Activated T-helper 1 cell treated with anti-CD3 and anti-CD28 coated beads, Interleukin-12 subunit alpha, Interleukin-12 subunit beta, Interleukin-2, Interleukin-4 antibody, amounts not matched to agents 30 ng/mL and 10 ng/mL and 1 ng/mL, durations not matched to agents 14 hours and 24 hours and 36 hours (primary cell): ENCODE measurements at regions of chr19 and their contacts with region 1.

Region 1: DNA sequence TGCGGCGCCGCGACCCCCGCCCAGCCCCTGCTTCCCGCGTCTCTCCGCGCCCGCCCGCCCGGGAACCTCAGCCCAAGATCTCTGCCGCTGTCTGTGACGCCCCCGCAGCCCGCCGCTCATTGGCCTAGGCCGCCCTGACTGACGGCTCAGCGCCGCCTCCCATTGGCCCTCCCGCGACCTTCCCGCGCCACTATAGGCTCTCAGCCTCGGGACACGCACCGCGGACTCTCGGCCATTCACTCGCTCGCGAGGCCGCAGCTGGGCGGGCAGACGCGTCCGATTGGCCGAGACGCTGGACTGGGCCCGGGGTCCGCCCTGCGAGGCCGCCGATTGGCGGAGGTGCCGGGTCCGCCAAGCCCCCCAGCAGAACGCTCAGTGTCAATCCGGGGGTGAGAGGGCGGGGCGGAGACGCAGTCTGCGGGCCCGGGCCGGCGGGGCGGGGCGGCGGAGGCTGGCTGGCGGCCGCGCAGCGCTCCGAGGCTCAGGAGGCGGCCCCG is at the start of gene PRKACA:
- DNase-seq: peak; percentile 99
- H3K4me3 Mint-ChIP-seq: peak within 1 kb of the TSS; percentile 94
- H3K27ac Mint-ChIP-seq: peak within 1 kb of the TSS; percentile 97
- H3K4me1 Mint-ChIP-seq: peaks cover 39% of the 10 kb centered on the region
- H3K27me3 Mint-ChIP-seq: peaks cover 2% of the 10 kb centered on the region
- total RNA-seq, gene PRKACA: 58.6 and 63.7 TPM in 2 replicates

Region 2: GRCh38 chr19:13597640-13598039 is 520.1 kb before region 1 on chr19:
- intact Hi-C with region 1: loop called (anchors 5 kb)
- DNase-seq: peak; percentile 34
- H3K4me3 Mint-ChIP-seq: no peak overlapping the region
- H3K27ac Mint-ChIP-seq: no peak overlapping the region
- H3K4me1 Mint-ChIP-seq: peaks cover 4% of the 10 kb centered on the region
- H3K27me3 Mint-ChIP-seq: no peaks in the 10 kb centered on the region

Region 3: GRCh38 chr19:13774217-13775191 is 343.2 kb before region 1 on chr19 and contains the start of gene C19orf53:
- intact Hi-C with region 1: loop called (anchors 10 kb)
- DNase-seq: peak; percentile 87
- H3K4me3 Mint-ChIP-seq: peak within 1 kb of the TSS; percentile 100
- H3K27ac Mint-ChIP-seq: peak within 1 kb of the TSS; percentile 99
- H3K4me1 Mint-ChIP-seq: peaks cover 25% of the 10 kb centered on the region
- H3K27me3 Mint-ChIP-seq: no peaks in the 10 kb centered on the region
- total RNA-seq, gene C19orf53: 158 and 162 TPM in 2 replicates

Region 4: GRCh38 chr19:14081325-14082093 is 36.2 kb before region 1 on chr19:
- intact Hi-C with region 1: loop called (anchors 1 kb)
- DNase-seq: peak; percentile 99
- H3K4me3 Mint-ChIP-seq: peak overlapping the region; percentile 96
- H3K27ac Mint-ChIP-seq: peak overlapping the region; percentile 97
- H3K4me1 Mint-ChIP-seq: peaks cover 8% of the 10 kb centered on the region
- H3K27me3 Mint-ChIP-seq: no peaks in the 10 kb centered on the region

Region 5: GRCh38 chr19:14091081-14091812 is 26.5 kb before region 1 on chr19:
- intact Hi-C with region 1: loop called (anchors 1 kb)
- DNase-seq: peak; percentile 74
- H3K4me3 Mint-ChIP-seq: peak overlapping the region; percentile 99
- H3K27ac Mint-ChIP-seq: peak overlapping the region; percentile 100
- H3K4me1 Mint-ChIP-seq: peaks cover 16% of the 10 kb centered on the region
- H3K27me3 Mint-ChIP-seq: no peaks in the 10 kb centered on the region